Sciatic nerve (tissue), 2 donors: ENCODE measurements at regions of chr6 and their contacts with region 1.

Region 1: GRCh38 chr6:87832025-87832825 is 130.2 kb upstream of the AKIRIN2 start:
- DNase-seq: no peak
- ATAC-seq: peak; percentile 77

Region 2: DNA sequence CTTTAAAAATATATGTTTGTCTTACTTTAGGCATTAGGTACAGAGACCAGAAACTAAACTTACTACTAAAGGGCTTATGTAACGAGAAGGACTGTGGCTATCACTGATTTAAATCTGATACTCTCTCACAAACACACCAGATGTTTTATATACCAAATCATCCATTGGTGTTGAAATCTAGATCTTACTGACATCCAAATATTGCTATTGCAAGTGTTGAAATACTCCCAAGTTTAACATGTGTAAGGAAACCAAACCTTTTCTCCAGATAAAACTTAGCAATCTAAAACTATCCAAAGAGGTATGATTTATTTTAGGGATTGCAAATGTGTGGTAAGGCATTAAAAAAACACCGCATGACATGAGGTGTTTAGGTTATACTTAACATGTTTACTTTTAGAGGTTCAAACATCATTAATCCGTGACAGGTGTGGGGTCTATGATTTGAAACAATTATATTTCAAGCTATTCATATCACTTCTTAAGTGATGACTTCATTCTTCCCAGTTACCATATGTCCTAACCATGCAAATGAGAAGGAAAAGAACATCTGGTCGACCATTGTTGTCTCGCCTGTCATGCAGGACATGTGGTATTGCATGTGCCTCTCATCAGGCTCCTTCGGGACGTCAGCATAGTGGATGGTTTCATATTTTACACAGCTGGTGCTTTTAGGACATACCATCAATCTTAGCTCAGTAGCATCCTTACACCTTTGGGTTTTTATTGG is 47.1 kb after region 1 on chr6:
- intact Hi-C with region 1: no loop called
- DNase-seq: no peak
- ATAC-seq: no peak

Region 3: DNA sequence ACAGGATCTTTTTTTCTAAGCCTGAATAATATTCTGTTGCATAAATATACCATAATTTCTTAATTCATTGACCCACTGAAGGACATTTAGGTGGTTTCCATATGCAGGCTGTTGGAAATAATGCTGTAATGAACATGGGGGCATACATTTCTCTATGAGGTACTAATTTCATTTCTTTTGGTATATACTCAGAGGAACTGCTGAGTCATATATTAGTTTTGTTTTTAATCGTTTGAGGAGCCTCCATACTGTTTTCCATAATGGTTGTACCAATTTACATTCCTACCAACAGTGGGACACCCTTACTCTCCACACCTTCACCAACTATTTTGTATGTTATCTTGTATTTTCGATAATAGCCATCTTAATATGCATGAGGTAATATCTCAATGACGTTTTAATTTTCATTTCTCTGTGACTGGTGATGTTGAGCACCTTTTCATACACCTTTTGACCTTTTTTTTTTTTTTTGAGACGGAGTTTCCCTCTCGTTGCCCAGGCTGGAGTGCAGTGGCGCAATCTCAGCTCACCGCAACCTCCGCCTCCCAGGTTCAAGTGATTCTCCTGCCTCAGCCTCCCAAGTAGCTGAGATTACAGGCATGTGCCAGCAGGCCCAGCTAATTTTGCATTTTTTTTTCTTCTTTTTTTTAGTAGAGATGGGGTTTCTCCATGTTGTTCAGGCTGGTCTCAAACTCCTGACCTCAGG is 943.8 kb after region 1 on chr6:
- intact Hi-C with region 1: loop called (anchors 10 kb)
- DNase-seq: no peak
- ATAC-seq: no peak